Activated T-helper 1 cell treated with anti-CD3 and anti-CD28 coated beads, Interleukin-12 subunit alpha, Interleukin-12 subunit beta, Interleukin-2, Interleukin-4 antibody, amounts not matched to agents 30 ng/mL and 10 ng/mL and 1 ng/mL, durations not matched to agents 14 hours and 24 hours and 36 hours (primary cell): ENCODE measurements at regions of chr12 and their contacts with region 1.

Region 1: DNA sequence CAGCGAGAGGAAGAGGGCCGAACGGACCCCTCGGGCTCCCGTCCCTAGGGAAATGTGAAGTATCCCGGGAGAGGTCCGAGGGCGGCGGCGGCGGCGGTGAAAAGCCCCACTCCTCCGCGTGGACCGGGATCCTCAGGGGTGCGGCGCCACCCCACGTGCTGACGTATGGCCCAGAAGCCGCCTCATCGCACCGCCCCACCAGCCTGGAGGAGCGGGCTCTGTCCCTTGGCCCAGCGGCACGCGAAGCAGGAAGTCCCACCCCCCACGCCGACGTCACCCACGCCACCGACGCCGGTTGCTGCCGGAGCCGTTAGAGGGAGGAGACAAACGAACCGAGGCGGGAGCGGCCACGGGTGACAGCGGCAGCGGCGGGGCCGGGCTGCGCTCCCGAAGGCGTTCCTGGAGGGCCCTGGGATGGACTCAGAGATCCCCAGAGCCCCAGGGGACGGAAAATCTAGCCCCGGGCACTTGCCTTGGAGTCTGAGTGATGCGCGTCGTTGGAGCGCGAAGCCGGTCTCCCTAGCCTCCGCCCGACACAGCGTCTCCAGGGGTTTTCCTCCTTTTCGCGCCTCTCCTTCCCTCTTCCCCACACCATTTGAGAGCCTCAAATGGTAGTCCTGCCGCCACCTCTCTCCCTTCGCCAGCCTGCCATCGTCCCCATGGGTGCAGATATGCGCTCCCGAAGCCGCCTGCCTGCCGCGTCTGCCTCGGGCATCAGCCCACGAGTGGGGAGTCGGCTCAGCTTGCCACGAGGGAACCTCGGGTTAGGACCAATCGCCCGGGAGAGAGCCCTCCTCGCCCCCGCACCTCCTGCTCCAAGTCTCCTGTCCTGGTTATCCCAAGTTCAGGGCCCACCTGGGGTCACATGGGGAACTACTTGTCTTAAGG is at the start of gene CEP83:
- DNase-seq: peak; percentile 98
- H3K4me3 Mint-ChIP-seq: peak within 1 kb of the TSS; percentile 93
- H3K27ac Mint-ChIP-seq: peak within 1 kb of the TSS; percentile 95
- H3K4me1 Mint-ChIP-seq: peaks cover 28% of the 10 kb centered on the region
- H3K27me3 Mint-ChIP-seq: peaks cover 6% of the 10 kb centered on the region
- total RNA-seq, gene CEP83: 37.7 and 40.0 TPM in 2 replicates

Region 2: GRCh38 chr12:93441617-93442410 is 1018.2 kb before region 1 on chr12 and contains the start of gene UBE2N:
- intact Hi-C with region 1: loop called (anchors 10 kb)
- DNase-seq: peak; percentile 95
- H3K4me3 Mint-ChIP-seq: peak within 1 kb of the TSS; percentile 96
- H3K27ac Mint-ChIP-seq: peak within 1 kb of the TSS; percentile 99
- H3K4me1 Mint-ChIP-seq: peaks cover 51% of the 10 kb centered on the region
- H3K27me3 Mint-ChIP-seq: no peaks in the 10 kb centered on the region
- total RNA-seq, gene UBE2N: 231 and 239 TPM in 2 replicates

Region 3: GRCh38 chr12:94262228-94263010 is 197.6 kb before region 1 on chr12:
- intact Hi-C with region 1: loop called (anchors 1 kb)
- DNase-seq: peak; percentile 56
- H3K4me3 Mint-ChIP-seq: peak overlapping the region; percentile 84
- H3K27ac Mint-ChIP-seq: peak overlapping the region; percentile 96
- H3K4me1 Mint-ChIP-seq: peaks cover 55% of the 10 kb centered on the region
- H3K27me3 Mint-ChIP-seq: no peaks in the 10 kb centered on the region

Region 4: GRCh38 chr12:94372461-94372860 is 87.5 kb before region 1 on chr12:
- intact Hi-C with region 1: loop called (anchors 1 kb)
- DNase-seq: no peak
- H3K4me3 Mint-ChIP-seq: peak overlapping the region; percentile 37
- H3K27ac Mint-ChIP-seq: peak overlapping the region; percentile 78
- H3K4me1 Mint-ChIP-seq: peaks cover 58% of the 10 kb centered on the region
- H3K27me3 Mint-ChIP-seq: no peaks in the 10 kb centered on the region

Region 5: GRCh38 chr12:94498073-94498472 is 38.1 kb after region 1 on chr12:
- intact Hi-C with region 1: no loop called
- DNase-seq: no peak
- H3K4me3 Mint-ChIP-seq: no peak overlapping the region
- H3K27ac Mint-ChIP-seq: no peak overlapping the region
- H3K4me1 Mint-ChIP-seq: no peaks in the 10 kb centered on the region
- H3K27me3 Mint-ChIP-seq: peaks cover 3% of the 10 kb centered on the region

Region 6: GRCh38 chr12:94621664-94622359 is 161.8 kb after region 1 on chr12:
- intact Hi-C with region 1: loop called (anchors 5 kb)
- DNase-seq: peak; percentile 41
- H3K4me3 Mint-ChIP-seq: peak overlapping the region; percentile 63
- H3K27ac Mint-ChIP-seq: peak overlapping the region; percentile 65
- H3K4me1 Mint-ChIP-seq: peaks cover 27% of the 10 kb centered on the region
- H3K27me3 Mint-ChIP-seq: peaks cover under 1% of the 10 kb centered on the region

Region 7: DNA sequence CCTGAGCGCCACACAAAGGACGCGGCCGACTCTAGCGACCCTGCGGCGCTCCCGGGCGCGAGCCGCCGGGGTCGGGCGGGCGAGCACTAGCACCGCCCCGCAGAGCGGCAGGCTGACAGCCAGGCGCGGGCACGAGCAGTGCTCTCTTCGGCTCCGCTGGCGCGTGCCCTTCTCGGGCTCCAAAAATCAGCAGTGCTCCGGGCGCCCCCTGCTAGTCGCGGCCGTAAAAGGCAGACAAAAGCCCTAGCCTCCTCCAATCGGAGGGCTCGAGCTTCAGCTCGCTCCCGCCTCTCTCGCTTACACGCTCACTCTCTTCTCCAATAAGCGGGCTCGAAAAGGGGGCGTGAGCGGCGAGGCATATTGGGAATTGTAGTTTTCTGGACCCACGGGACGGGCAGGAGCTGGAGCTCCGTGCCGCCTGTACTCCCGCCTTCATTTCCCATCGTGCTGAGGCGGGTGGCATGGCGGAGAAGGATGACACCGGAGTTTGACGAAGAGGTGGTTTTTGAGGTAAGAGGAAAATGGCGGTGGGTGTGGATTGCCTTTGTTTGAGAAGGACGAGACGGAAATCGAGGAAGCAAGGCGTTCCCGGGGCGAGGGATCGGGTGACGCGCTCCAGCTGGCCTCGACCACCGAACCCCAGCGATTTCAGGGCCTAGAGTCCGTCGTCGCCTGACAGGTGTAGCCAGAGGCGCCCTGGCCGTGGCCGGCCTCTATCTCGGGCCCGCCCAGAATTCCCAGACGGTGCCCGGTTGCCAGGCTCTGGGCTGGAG is 757.6 kb after region 1 on chr12 and contains the starts of genes FGD6 and VEZT:
- intact Hi-C with region 1: loop called (anchors 5 kb)
- DNase-seq: peak; percentile 98
- H3K4me3 Mint-ChIP-seq: peak within 1 kb of the TSS; percentile 97
- H3K27ac Mint-ChIP-seq: peak within 1 kb of the TSS; percentile 98
- H3K4me1 Mint-ChIP-seq: peaks cover 37% of the 10 kb centered on the region
- H3K27me3 Mint-ChIP-seq: peaks cover 9% of the 10 kb centered on the region
- total RNA-seq, gene FGD6: 0.64 and 0.86 TPM in 2 replicates
- total RNA-seq, gene VEZT: 58.1 and 64.7 TPM in 2 replicates